Tibial artery (tissue), 4 donors: ENCODE measurements at regions of chr14 and their contacts with region 1.

Region 1: GRCh38 chr14:95774265-95775160 is 60.6 kb upstream of the TCL1A start:
- DNase-seq: peak in 1 of 2 donors; percentile 50
- H3K4me3 ChIP-seq: no peak overlapping the region
- H3K27ac ChIP-seq: no peak overlapping the region
- H3K4me1 ChIP-seq: no peaks in the 10 kb centered on the region
- H3K27me3 ChIP-seq: peaks cover 0 to 5% of the 10 kb centered on the region in 2 donors
- CTCF ChIP-seq: peak; percentile 70 to 83

Region 2: DNA sequence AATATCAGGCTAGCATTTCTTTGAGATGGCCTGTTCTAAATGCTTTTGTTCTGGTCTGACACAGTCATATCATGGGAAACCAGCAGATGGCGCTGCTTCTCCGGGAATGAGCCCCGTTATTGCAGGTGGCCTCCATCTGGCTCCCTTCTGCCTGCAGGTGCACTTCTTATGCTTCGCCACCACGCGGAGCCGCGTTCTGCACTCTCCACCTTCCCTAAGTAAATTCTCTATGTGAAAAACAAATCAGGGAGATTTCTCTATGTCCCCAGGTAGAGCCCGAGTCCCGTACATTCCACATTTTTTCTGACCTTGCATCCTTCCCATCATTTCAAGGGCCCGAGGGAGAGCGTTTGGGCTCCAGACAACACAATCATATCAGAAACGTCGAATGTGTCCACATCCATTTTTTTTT is 213.5 kb before region 1 on chr14:
- intact Hi-C with region 1: loop called (anchors 2 kb)
- DNase-seq: peak; percentile 71 to 80
- H3K4me3 ChIP-seq: no peak overlapping the region
- H3K27ac ChIP-seq: no peak overlapping the region
- H3K4me1 ChIP-seq: no peaks in the 10 kb centered on the region
- H3K27me3 ChIP-seq: no peaks in the 10 kb centered on the region
- CTCF ChIP-seq: peak; percentile 83 to 90

Region 3: DNA sequence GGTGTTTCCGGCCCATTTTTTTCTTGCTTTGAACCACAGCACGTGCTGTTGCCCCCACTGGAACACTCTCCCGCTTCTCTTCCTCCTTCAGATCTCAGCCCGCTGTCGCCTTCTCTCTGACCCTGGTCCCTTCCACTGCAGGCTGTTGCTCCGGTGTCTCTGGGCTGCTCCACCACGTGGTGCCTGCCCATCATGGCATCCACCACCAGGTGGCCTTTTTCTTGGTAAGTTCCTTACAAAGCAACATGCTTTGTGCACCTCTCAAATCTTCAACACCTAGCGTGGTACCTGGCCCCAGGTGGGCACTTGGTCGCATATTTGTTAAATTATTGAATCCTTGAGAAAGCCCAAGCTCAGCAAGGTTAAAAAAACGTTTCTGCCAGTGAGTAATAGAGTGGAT is 121.2 kb after region 1 on chr14:
- intact Hi-C with region 1: no loop called
- DNase-seq: no peak
- H3K4me3 ChIP-seq: no peak overlapping the region
- H3K27ac ChIP-seq: no peak overlapping the region
- H3K4me1 ChIP-seq: no peaks in the 10 kb centered on the region
- H3K27me3 ChIP-seq: peaks cover 0 to 7% of the 10 kb centered on the region in 2 donors
- CTCF ChIP-seq: peak in 1 of 2 experiments; percentile 4